ENCODE measurements at regions of chr11 and their contacts with region 1.

Region 1: DNA sequence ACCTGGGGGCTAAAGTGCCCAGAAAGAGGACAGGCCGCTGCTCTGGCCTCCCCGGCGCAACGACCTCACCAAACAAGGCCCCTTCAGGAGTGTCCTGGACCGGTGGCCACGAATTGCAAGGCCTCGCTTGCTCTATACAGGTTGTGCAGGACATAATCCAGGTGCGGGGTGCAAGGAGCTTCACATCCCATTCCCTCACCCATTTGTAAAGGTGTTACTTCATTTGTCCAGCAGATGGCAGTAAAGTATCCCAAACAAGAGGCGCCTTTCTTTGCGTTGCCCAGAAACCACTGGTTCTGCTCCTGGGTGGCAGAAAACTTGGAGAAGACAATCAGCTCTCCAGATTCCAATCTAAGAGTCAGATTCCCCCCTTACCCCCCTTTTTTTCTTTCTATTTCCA is 35.9 kb upstream of the PRDM11 start:
- DNase-seq: peak in 3 of 5 donors; percentile 51 to 64 (median 58)
- H3K4me3 ChIP-seq: no peak overlapping the region
- H3K4me3 Mint-ChIP-seq: no peak overlapping the region
- H3K27ac ChIP-seq: no peak overlapping the region
- H3K27ac Mint-ChIP-seq: no peak overlapping the region
- H3K4me1 ChIP-seq: no peaks in the 10 kb centered on the region
- H3K4me1 Mint-ChIP-seq: no peaks in the 10 kb centered on the region
- H3K27me3 ChIP-seq: no peaks in the 10 kb centered on the region
- H3K27me3 Mint-ChIP-seq: peaks cover 18 to 62% of the 10 kb centered on the region in 2 donors

Region 2: DNA sequence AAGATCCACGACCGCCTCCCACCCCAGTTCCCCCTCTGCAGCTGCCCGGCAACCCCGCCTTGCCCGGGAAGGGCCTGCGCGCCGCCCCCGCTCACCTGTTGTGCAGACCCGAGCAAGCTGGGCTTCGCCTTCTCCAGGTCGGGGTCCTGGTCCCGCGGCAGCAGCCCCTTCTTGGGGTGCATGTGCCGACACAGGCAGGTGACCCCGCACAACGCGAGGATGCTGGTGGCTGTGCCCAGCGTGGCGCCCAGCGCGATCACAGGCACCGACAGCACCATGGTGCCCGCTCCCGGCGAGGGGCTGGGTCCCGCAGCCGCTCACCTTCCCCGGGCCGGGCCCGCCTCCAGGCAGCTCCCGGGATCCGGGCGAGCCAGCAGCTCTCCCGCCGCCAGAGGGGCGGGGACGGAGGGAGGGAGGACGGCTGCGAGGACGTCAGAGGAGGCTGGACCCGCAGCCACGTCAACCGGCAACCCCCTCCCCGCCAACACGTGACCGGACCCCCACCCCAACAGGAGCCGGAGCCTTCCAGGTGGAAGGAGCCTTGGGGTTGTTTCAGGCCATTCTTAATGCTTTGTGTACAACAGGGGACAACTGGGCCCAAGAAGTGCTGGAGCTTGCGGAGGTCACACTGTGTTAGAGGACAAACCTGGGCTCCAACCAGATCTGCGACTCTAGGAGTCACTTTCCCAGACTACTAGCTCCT is 175.5 kb after region 1 on chr11 and contains the start of gene SYT13:
- CTCF ChIA-PET with region 1: interaction called, 14 read pairs
- POLR2A ChIA-PET with region 1: no interaction called
- DNase-seq: no peak
- H3K4me3 ChIP-seq: no peak within 1 kb of the TSS
- H3K4me3 Mint-ChIP-seq: peak within 1 kb of the TSS in 3 of 7 donors; percentile 10 to 65 (median 42)
- H3K27ac ChIP-seq: no peak within 1 kb of the TSS
- H3K27ac Mint-ChIP-seq: no peak within 1 kb of the TSS
- H3K4me1 ChIP-seq: no peaks in the 10 kb centered on the region
- H3K4me1 Mint-ChIP-seq: no peaks in the 10 kb centered on the region
- H3K27me3 ChIP-seq: peaks cover 30% of the 10 kb centered on the region
- H3K27me3 Mint-ChIP-seq: peaks cover 38 to 81% of the 10 kb centered on the region in 2 donors
- total RNA-seq, gene SYT13: not detected

Region 3: DNA sequence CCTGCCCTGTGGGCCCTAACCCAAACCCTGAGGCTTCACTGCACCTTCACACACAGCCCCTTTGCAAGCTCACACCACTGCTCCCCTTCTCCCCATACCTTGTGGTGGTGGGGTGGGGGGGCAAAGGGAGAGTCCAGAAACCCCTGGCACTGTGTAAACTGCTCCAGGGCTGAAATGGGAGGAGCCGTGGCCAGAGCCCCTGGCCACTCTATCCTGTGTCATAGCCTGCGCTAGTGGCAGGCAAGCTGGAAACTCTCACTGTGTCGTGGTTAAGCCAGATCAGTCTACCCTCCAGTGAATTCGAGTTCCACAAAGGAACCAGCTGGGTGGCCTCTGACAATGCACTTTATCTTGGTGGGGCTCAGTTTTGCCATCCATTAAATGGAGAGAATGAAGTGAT is 183.9 kb after region 1 on chr11:
- CTCF ChIA-PET with region 1: interaction called, 15 read pairs
- POLR2A ChIA-PET with region 1: no interaction called
- DNase-seq: no peak
- H3K4me3 ChIP-seq: no peak overlapping the region
- H3K4me3 Mint-ChIP-seq: no peak overlapping the region
- H3K27ac ChIP-seq: no peak overlapping the region
- H3K27ac Mint-ChIP-seq: no peak overlapping the region
- H3K4me1 ChIP-seq: no peaks in the 10 kb centered on the region
- H3K4me1 Mint-ChIP-seq: no peaks in the 10 kb centered on the region
- H3K27me3 ChIP-seq: peaks cover 3% of the 10 kb centered on the region
- H3K27me3 Mint-ChIP-seq: peaks cover 25 to 65% of the 10 kb centered on the region in 2 donors

Region 4: GRCh38 chr11:45332276-45332934 is 221.8 kb after region 1 on chr11:
- CTCF ChIA-PET with region 1: interaction called, 92 read pairs
- POLR2A ChIA-PET with region 1: no interaction called
- DNase-seq: peak in 3 of 5 donors; percentile 14 to 23 (median 22)
- H3K4me3 ChIP-seq: no peak overlapping the region
- H3K4me3 Mint-ChIP-seq: no peak overlapping the region
- H3K27ac ChIP-seq: no peak overlapping the region
- H3K27ac Mint-ChIP-seq: no peak overlapping the region
- H3K4me1 ChIP-seq: no peaks in the 10 kb centered on the region
- H3K4me1 Mint-ChIP-seq: peaks cover 0 to 3% (median 0%) of the 10 kb centered on the region in 3 donors
- H3K27me3 ChIP-seq: no peaks in the 10 kb centered on the region
- H3K27me3 Mint-ChIP-seq: peaks cover 21 to 35% of the 10 kb centered on the region in 2 donors

Measured in CD8-positive, alpha-beta memory T cell (primary cell).